ENCODE measurements at regions of chr5 and their contacts with region 1.

Region 1: DNA sequence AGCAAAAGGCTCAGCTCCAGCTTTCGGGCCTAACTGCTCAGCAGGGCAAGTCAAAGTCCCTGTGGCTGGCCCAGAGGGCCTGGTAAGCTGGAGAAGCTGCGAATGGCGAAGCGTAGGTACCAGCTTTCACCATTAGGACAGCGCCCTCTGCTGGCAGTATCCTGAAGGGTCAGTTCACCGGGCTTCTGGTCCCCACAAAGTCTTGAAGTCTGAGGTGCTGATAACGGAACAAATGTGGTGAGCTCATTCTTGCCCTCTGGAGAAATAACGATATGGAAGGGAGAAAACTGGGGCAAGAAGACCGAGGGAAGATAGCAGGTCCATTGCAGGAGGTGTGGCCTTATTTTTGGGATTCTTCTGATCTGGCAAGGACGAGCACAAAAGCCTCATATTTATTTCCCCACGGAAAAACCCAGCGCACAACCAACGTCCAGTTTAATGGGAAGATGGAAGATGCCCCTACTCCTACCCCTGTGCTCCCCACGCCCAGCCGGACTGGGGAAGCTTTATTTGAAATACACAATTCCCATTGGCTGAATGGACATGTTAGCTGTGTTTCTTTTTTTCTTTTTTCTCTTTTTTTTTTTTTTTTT is 7.2 kb downstream of the SOWAHA start:
- DNase-seq: peak; percentile 72
- H3K4me3 ChIP-seq: no peak overlapping the region
- H3K27ac ChIP-seq: no peak overlapping the region
- H3K4me1 ChIP-seq: peaks cover 3% of the 10 kb centered on the region
- H3K27me3 ChIP-seq: no peaks in the 10 kb centered on the region
- CTCF ChIP-seq: peak; percentile 76 to 93

Region 2: GRCh38 chr5:132500931-132501630 is 319.2 kb before region 1 on chr5:
- CTCF ChIA-PET with region 1: no interaction called
- dilution Hi-C with region 1: no loop called
- in situ Hi-C with region 1: no loop called
- intact Hi-C with region 1: loop called (anchors 1 kb)
- DNase-seq: no peak
- H3K4me3 ChIP-seq: no peak overlapping the region
- H3K27ac ChIP-seq: no peak overlapping the region
- H3K4me1 ChIP-seq: peaks cover 19% of the 10 kb centered on the region
- H3K27me3 ChIP-seq: no peaks in the 10 kb centered on the region
- CTCF ChIP-seq: peak; percentile 75 to 85

Region 3: DNA sequence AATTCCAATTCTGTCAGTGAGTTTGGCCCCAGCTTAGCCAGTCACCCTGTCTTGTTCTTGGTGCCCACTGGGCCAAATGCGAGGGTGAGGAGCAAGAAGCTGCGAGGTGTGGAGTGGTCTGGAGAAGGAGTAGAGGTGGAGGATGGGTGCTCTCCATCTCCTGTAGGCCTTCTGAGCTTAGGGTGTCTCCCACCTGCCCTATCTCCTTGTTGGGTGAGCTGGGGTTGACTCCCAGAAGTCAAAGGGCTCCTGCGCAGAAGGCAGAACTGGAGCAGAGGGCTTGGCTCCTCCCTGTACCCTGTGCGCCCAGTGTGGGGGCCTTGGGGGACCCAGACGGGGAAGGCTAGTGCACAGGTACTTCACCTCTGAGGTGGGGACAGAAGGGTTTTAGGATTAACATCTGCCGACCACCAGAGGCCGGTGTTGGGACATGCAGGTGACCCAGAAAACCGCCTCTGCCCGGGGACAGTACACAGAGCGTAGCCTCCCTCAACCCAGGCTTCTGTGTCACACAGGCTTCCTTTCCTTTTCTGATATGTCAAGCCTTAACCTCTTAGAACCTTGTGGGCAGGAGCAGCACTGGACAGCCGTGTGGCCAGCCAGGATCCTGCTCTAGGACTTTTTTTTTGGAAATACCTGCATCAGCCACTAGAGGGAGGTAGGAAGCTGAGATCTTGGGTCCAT is 293.8 kb before region 1 on chr5:
- CTCF ChIA-PET with region 1: no interaction called
- dilution Hi-C with region 1: no loop called
- in situ Hi-C with region 1: loop called in 1 of 2 experiments (anchors 10 kb)
- intact Hi-C with region 1: loop called (anchors 1 kb)
- DNase-seq: peak; percentile 42
- H3K4me3 ChIP-seq: no peak overlapping the region
- H3K27ac ChIP-seq: no peak overlapping the region
- H3K4me1 ChIP-seq: peaks cover 3% of the 10 kb centered on the region
- H3K27me3 ChIP-seq: no peaks in the 10 kb centered on the region
- CTCF ChIP-seq: peak; percentile 78 to 79

Region 4: GRCh38 chr5:132540764-132541163 is 279.5 kb before region 1 on chr5:
- CTCF ChIA-PET with region 1: no interaction called
- dilution Hi-C with region 1: no loop called
- in situ Hi-C with region 1: no loop called
- intact Hi-C with region 1: no loop called
- DNase-seq: no peak
- H3K4me3 ChIP-seq: no peak overlapping the region
- H3K27ac ChIP-seq: no peak overlapping the region
- H3K4me1 ChIP-seq: no peaks in the 10 kb centered on the region
- H3K27me3 ChIP-seq: peaks cover 8% of the 10 kb centered on the region
- CTCF ChIP-seq: no peak

Region 5: DNA sequence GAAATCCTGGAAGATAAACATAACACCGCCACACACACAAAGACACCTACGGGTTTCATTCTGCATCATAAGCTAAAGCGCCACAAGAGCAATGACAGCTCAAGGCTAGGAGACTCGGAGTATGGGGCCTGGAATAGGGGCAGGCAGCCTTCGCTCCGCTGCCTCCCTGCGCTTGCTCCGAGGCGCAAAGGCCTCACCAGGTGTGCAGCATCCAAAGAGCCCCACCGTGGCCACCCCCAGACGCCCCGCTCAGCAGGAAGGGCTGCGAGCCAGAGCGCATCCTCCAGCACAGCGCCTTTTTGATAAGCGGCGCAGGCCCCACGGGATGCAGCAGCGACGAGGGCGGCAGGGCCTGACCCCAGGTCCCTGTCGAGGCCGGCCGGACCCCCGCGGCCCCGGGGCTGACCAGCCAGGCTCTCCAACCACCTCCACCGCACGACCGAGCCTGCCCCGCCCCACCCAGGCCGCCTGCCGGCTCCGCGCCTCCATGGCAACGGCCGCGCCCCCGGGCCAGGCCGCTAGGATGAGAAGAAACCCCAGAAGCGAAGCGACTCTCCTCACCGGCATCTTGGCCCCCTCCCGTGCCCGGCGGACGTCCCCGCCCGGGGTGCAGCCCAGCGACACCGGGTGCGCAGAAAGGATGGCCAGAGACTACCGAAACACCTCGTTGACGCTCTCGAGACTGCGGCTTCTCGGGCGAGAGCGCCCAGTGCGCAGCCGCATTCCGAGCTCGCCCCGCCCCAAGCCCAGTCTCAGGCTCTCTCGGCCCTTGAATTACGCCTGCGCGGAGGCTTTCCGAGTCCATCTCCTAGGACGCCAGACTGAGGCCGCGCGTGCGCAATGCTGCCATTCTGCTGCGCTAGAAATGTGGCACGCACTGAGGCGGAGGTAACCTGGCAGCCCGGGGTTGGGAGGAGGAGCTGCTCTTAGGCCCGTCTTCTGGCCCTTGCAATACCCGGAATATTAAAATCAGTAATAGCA is 83.1 kb before region 1 on chr5 and contains the start of gene KIF3A:
- CTCF ChIA-PET with region 1: interaction called, 4 read pairs
- dilution Hi-C with region 1: no loop called
- in situ Hi-C with region 1: no loop called
- intact Hi-C with region 1: loop called (anchors 5 kb)
- DNase-seq: peak; percentile 96
- H3K4me3 ChIP-seq: peak within 1 kb of the TSS; percentile 79 to 95 (median 91)
- H3K27ac ChIP-seq: peak within 1 kb of the TSS; percentile 66
- H3K4me1 ChIP-seq: peaks cover 24% of the 10 kb centered on the region
- H3K27me3 ChIP-seq: no peaks in the 10 kb centered on the region
- CTCF ChIP-seq: no peak
- total RNA-seq, gene KIF3A: 11.3 to 28.5 TPM

Region 6: GRCh38 chr5:132771503-132771998 is 48.7 kb before region 1 on chr5:
- CTCF ChIA-PET with region 1: interaction called, 9 read pairs
- dilution Hi-C with region 1: loop called (anchors 5 kb)
- in situ Hi-C with region 1: no loop called
- intact Hi-C with region 1: no loop called
- DNase-seq: no peak
- H3K4me3 ChIP-seq: no peak overlapping the region
- H3K27ac ChIP-seq: no peak overlapping the region
- H3K4me1 ChIP-seq: peaks cover 21% of the 10 kb centered on the region
- H3K27me3 ChIP-seq: no peaks in the 10 kb centered on the region
- CTCF ChIP-seq: no peak

Measured in mammary epithelial cell (primary cell).